IMR-90 (cell line): ENCODE measurements at regions of chr15 and their contacts with region 1.

Region 1: GRCh38 chr15:73001840-73002239 is 50.4 kb upstream of the NEO1 start:
- DNase-seq: no peak
- ATAC-seq: no peak
- H3K4me3 ChIP-seq: no peak overlapping the region
- H3K27ac ChIP-seq: no peak overlapping the region
- H3K4me1 ChIP-seq: peaks cover 1% of the 10 kb centered on the region; the same call in 1 of the 2 replicates
- H3K27me3 ChIP-seq: no peaks in the 10 kb centered on the region
- CTCF ChIP-seq: no peak
- POLR2A ChIP-seq: no peak
- RAD21 ChIP-seq: no peak

Region 2: DNA sequence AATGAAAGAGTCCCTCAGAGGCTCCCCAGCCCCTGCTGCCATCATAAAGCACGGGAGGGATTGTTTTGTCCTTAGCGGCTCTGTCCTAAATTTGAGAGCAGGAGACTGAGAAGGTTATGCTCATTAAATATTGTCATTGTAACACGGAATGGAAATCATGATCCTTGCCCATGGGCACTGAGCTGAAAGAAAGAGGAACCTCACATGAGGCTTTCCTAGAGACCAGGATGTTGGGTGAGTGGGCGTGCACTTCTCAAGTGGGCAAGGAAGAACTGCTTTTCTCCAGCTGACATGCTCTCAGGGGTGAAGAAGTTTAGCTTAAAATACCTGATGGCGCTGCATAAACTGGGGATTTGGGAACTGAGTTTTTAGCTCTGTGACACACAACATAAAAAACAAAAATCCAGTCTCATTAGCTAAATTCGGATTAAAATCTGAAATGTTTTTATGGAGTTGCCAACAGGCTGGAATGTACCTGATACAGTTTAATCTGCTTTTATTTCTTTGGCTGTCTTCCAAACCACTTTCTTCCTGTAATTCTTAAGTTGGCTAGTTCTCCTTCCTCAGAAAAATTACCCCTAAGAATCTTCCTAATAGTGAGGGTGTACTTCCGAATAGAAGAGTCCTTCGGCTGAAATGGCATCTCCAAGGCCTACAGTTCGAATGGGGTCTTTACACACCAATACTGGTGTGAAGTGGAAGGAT is 249.9 kb before region 1 on chr15:
- CTCF ChIA-PET with region 1: no interaction called
- POLR2A ChIA-PET with region 1: no interaction called
- dilution Hi-C with region 1: no loop called
- in situ Hi-C with region 1: no loop called
- intact Hi-C with region 1: no loop called
- DNase-seq: peak; percentile 2
- ATAC-seq: no peak
- H3K4me3 ChIP-seq: no peak overlapping the region
- H3K27ac ChIP-seq: no peak overlapping the region
- H3K4me1 ChIP-seq: peaks cover 4% of the 10 kb centered on the region
- H3K27me3 ChIP-seq: no peaks in the 10 kb centered on the region
- CTCF ChIP-seq: no peak
- POLR2A ChIP-seq: no peak
- RAD21 ChIP-seq: no peak

Region 3: DNA sequence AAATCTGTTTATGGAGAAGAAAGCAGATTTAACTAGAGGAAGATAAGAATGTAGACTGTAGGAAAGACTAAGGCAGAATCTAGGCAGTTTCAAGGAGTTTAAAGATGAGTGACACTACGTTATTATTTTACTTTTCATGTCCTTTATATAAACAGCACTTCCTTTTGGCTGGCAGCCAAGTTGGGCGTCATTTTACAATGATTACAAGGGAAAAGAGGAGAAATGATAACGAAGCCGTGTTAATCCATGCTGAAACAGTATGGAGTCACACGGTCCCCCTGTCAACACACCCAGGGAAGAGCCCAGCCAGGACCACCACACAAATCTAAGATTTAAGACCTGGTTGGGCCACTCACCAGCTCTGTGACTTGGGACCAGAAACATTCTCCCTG is 33.3 kb before region 1 on chr15:
- CTCF ChIA-PET with region 1: no interaction called
- POLR2A ChIA-PET with region 1: no interaction called
- dilution Hi-C with region 1: no loop called
- in situ Hi-C with region 1: no loop called
- intact Hi-C with region 1: loop called (anchors 1 kb)
- DNase-seq: no peak
- ATAC-seq: no peak
- H3K4me3 ChIP-seq: no peak overlapping the region
- H3K27ac ChIP-seq: no peak overlapping the region
- H3K4me1 ChIP-seq: peaks cover 8% of the 10 kb centered on the region
- H3K27me3 ChIP-seq: no peaks in the 10 kb centered on the region; the same call in 1 of the 2 replicates
- CTCF ChIP-seq: no peak
- POLR2A ChIP-seq: no peak
- RAD21 ChIP-seq: no peak

Region 4: DNA sequence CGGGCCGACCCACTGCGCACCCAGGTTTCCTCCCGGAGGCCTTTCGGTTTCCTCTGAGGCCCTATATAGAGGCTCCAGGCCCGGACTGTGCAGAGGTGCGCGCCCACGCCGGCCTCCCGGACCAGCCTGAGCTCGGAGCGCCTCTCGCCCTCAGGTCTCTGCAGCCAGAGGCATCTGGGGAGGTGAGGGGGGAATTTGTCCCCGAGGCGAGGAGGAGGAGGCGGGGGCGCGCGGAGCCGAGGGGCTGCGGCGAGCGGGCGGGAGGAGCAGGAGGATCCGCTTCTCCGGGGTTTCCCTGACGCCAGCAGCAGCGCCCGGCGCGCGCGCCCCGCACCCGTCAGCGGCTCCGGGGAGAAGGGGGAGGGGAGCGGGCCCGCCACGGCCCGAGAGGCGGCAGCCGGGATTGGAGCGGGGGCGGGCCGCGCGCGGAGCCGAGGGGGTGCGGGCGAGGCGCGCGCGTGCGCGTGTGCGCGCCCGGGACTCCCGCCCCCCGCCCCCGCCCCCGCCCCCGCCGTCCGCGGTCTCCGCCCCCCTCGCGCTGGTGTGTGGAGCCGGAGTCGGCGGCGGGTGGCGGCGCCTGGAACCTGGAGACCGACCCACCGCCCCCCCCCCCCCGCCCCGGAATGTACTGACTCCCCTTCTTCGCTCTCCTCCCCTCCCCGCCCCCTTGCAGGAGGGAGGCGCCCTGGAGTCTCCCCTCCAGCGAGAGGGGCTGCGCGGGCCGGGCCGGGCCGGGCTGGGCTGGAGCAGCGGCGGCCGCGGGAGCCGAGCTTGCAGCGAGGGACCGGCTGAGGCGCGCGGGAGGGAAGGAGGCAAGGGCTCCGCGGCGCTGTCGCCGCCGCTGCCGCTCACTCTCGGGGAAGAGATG is 50.2 kb after region 1 on chr15 and contains the start of gene NEO1:
- CTCF ChIA-PET with region 1: no interaction called
- POLR2A ChIA-PET with region 1: no interaction called
- dilution Hi-C with region 1: no loop called
- in situ Hi-C with region 1: no loop called
- intact Hi-C with region 1: loop called (anchors 5 kb)
- DNase-seq: peak; percentile 70
- ATAC-seq: peak; percentile 93
- H3K4me3 ChIP-seq: peak within 1 kb of the TSS; percentile 90
- H3K27ac ChIP-seq: peak within 1 kb of the TSS; percentile 91
- H3K4me1 ChIP-seq: peaks cover 2% of the 10 kb centered on the region; the same call in 1 of the 2 replicates
- H3K27me3 ChIP-seq: peaks cover 10% of the 10 kb centered on the region
- CTCF ChIP-seq: no peak
- POLR2A ChIP-seq: no peak
- RAD21 ChIP-seq: no peak
- total RNA-seq, gene NEO1: 16.3 and 18.3 TPM in 2 replicates